ENCODE measurements at regions of chrX and their contacts with region 1.

Region 1: DNA sequence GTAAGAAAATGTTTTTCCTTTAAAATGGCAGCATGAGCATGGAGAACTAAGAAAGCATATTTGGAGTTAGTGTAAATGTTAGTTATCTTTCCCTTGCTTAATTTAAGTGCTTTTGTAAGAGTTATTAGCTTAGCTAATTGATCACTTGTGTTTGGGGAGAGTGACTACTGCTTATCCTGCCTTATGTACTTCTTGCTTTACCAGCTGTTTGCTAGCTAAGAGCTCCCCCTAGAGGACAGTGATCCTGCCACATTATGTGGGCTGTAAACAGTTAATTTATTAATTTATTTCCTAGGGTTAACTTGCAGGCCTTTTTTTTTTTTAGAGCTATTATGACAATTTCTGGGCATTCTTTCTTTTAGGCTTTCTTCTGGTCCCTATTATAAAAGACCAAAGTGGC is 435.8 kb downstream of the MAGEB5 start:
- DNase-seq: peak in 1 of 4 experiments; percentile 13
- ATAC-seq: no peak
- H3K4me3 ChIP-seq: no peak overlapping the region
- H3K27ac ChIP-seq: no peak overlapping the region
- H3K4me1 ChIP-seq: no peaks in the 10 kb centered on the region
- H3K27me3 ChIP-seq: no peaks in the 10 kb centered on the region
- CTCF ChIP-seq: peak in 2 of 3 experiments; percentile 15 to 16; a peak in 1 of 6 replicates
- EP300 ChIP-seq: no peak
- POLR2A ChIP-seq: no peak
- RAD21 ChIP-seq: no peak; a peak in 1 of 4 replicates

Region 2: GRCh38 chrX:26613956-26614355 is 37.8 kb before region 1 on chrX:
- CTCF ChIA-PET with region 1: no interaction called
- POLR2A ChIA-PET with region 1: no interaction called
- in situ Hi-C with region 1: no loop called
- intact Hi-C with region 1: no loop called
- DNase-seq: no peak
- ATAC-seq: no peak
- H3K4me3 ChIP-seq: no peak overlapping the region
- H3K27ac ChIP-seq: no peak overlapping the region
- H3K4me1 ChIP-seq: no peaks in the 10 kb centered on the region
- H3K27me3 ChIP-seq: no peaks in the 10 kb centered on the region
- CTCF ChIP-seq: no peak
- EP300 ChIP-seq: no peak
- POLR2A ChIP-seq: no peak
- RAD21 ChIP-seq: no peak

Region 3: DNA sequence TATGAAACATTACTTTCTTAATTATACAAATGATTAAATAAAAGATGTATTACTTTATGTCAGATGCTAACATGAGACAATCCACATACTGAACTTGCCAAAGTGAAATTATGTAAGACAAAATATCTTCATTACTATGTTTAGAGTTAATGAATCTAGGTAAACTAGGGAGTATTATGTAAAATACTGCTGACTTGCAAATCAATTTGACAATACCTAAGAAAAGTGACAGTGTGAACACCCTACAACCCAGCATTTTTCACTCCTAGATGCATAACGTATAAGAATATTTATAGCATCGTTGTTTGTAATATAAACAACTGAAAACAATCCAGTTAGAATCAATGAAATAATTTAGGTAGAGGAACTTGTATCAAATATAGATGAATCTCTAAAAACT is 110.5 kb after region 1 on chrX:
- CTCF ChIA-PET with region 1: no interaction called
- POLR2A ChIA-PET with region 1: no interaction called
- in situ Hi-C with region 1: no loop called
- intact Hi-C with region 1: no loop called
- DNase-seq: no peak
- ATAC-seq: no peak
- H3K4me3 ChIP-seq: no peak overlapping the region
- H3K27ac ChIP-seq: no peak overlapping the region
- H3K4me1 ChIP-seq: no peaks in the 10 kb centered on the region
- H3K27me3 ChIP-seq: no peaks in the 10 kb centered on the region
- CTCF ChIP-seq: no peak
- EP300 ChIP-seq: no peak
- POLR2A ChIP-seq: no peak
- RAD21 ChIP-seq: no peak

Region 4: DNA sequence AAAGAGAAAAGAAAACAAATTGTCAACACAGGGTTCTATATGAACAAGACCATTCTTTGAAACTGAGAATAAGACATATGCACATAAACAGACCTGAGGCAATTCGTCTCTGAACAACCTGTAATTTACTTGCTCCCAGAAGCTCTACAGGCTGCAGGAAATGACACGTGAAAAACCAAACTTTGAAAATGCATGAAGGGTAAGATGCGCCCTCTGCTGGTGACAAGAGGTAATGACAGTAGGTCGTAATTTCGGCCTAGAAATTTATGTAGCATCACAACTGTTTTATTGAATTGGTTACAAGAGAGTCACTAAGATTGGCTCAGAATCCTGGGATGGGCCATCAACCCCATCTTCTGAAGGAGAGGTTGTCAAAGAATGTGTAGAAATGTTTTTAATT is 534.9 kb after region 1 on chrX:
- CTCF ChIA-PET with region 1: no interaction called
- POLR2A ChIA-PET with region 1: no interaction called
- in situ Hi-C with region 1: loop called (anchors 25 kb)
- intact Hi-C with region 1: loop called (anchors 5 kb)
- DNase-seq: peak; percentile 4 to 37 (median 12)
- ATAC-seq: no peak
- H3K4me3 ChIP-seq: no peak overlapping the region
- H3K27ac ChIP-seq: no peak overlapping the region
- H3K4me1 ChIP-seq: no peaks in the 10 kb centered on the region
- H3K27me3 ChIP-seq: no peaks in the 10 kb centered on the region
- CTCF ChIP-seq: peak; percentile 33 to 59 (median 55); a peak in 5 of 6 replicates
- EP300 ChIP-seq: no peak
- POLR2A ChIP-seq: no peak
- RAD21 ChIP-seq: peak; percentile 10 to 57; a peak in 2 of 4 replicates

Measured in K562 (cell line).